ENCODE measurements at regions of chr6 and their contacts with region 1.

Region 1: DNA sequence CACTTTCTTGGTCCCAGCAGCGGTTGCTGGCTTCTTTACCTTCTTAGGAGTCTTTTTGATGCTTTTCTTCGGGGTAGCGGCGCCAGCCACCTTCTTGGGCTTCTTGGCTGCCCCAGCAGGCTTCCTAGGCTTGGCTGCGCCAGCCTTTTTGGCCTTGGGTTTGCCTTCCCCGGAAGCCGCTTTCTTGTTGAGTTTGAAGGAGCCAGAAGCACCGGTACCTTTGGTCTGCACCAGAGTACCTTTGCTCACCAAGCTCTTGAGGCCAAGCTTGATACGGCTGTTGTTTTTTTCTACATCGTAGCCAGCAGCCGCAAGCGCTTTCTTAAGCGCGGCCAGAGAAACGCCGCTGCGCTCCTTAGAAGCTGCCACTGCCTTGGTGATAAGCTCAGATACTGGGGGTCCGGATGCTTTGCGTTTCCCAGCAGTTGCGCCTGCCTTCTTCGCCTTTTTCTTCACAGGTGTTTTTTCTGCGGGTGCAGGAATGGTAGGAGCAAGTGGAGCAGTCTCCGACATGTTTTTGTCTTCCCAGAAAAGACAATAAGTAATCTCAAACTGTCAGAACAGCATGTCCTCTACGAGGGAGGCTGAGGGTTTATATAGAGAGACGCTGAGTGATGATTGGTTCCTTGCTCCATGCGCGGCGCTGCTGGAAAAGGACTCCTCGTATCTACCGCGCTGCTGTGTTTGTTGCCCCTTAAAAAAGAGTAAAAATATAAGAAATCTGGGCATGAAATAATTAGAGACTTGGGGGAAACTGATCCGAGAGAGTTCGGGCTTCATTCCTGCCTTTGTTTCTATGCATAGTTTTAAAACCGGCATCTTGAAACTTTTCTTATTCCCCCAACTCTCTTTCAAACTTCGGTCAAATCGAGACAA is 130.3 kb upstream of the BTN3A2 start:
- DNase-seq: peak; percentile 89
- ATAC-seq: peak; percentile 64
- H3K4me3 Mint-ChIP-seq: peak overlapping the region; percentile 78
- H3K27ac Mint-ChIP-seq: peak overlapping the region; percentile 99
- H3K4me1 Mint-ChIP-seq: peaks cover 41% of the 10 kb centered on the region
- H3K27me3 Mint-ChIP-seq: no peaks in the 10 kb centered on the region

Region 2: GRCh38 chr6:26045065-26045927 is 189.4 kb before region 1 on chr6:
- CTCF ChIA-PET with region 1: no interaction called
- POLR2A ChIA-PET with region 1: interaction called, 104 read pairs
- DNase-seq: peak; percentile 91
- ATAC-seq: peak; percentile 55
- H3K4me3 Mint-ChIP-seq: peak overlapping the region; percentile 88
- H3K27ac Mint-ChIP-seq: peak overlapping the region; percentile 99
- H3K4me1 Mint-ChIP-seq: peaks cover 43% of the 10 kb centered on the region
- H3K27me3 Mint-ChIP-seq: no peaks in the 10 kb centered on the region

Region 3: DNA sequence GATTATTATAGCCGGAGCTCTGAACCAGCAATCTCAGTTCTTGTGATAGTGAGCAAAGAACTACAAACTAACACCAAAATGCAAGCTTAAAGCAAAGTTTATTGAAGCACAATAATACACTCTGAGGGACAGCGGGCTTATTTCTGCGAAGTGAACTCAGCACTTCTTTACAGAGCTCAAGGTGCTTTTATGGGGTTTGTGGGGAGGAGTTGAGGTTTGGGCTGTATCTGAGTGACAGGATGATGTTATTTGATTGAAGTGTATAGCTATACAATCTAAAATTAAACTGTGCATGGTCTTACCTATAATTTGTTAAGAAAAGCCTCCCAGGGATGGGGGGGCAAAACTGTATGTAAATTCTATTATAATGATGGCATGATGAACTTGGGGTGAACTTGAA is 148.4 kb before region 1 on chr6:
- CTCF ChIA-PET with region 1: no interaction called
- POLR2A ChIA-PET with region 1: no interaction called
- DNase-seq: peak; percentile 81
- ATAC-seq: peak; percentile 91
- H3K4me3 Mint-ChIP-seq: peak overlapping the region; percentile 80
- H3K27ac Mint-ChIP-seq: peak overlapping the region; percentile 70
- H3K4me1 Mint-ChIP-seq: peaks cover 54% of the 10 kb centered on the region
- H3K27me3 Mint-ChIP-seq: peaks cover 3% of the 10 kb centered on the region

Region 4: GRCh38 chr6:26163427-26164119 is 71.1 kb before region 1 on chr6:
- CTCF ChIA-PET with region 1: no interaction called
- POLR2A ChIA-PET with region 1: interaction called, 294 read pairs
- DNase-seq: no peak
- ATAC-seq: no peak
- H3K4me3 Mint-ChIP-seq: no peak overlapping the region
- H3K27ac Mint-ChIP-seq: peak overlapping the region; percentile 61
- H3K4me1 Mint-ChIP-seq: peaks cover 66% of the 10 kb centered on the region
- H3K27me3 Mint-ChIP-seq: peaks cover 2% of the 10 kb centered on the region

Region 5: DNA sequence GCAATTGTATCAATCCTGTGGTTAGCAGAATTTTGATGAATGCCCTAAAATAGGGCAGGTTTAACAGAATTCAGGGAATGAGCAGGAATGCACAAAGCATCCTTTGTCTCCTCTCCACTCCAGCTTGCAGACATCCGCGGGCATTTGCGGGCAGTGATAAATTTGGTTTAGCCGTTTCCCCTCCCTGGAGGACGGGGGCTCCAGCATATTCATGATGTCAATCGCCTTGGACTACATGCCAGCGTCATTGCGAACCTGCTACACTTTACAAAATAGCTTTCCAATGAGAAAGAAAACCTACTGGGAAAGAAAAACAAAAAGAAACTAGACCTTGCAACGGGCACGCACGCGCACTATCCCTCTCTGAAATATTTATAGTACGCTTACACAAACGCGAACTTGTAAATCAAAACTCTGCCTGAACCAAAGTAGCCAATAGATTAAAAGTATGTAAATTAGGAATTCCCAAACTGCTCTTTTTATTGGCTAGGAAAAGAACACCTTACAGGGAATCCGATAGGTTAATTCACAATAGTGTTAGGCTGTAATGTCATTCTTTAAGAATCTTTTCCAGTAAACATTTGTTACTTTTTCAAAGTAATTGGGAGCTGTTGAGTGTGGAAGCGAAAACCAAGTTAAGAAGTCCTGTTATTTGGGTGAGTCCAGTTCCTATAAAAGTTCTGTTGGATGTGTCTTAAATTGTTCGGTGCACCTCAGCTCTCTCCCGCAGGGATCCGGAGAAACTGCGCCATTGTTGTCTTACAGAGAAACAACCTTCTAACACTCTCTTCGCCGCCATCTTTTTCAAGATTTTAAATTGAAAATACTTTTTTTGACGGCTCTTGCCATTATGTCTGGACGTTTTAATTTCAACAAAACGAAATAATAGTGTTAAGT is 10.8 kb before region 1 on chr6:
- CTCF ChIA-PET with region 1: interaction called, 6 read pairs
- POLR2A ChIA-PET with region 1: interaction called, 674 read pairs
- DNase-seq: peak; percentile 83
- ATAC-seq: peak; percentile 83
- H3K4me3 Mint-ChIP-seq: no peak overlapping the region
- H3K27ac Mint-ChIP-seq: no peak overlapping the region
- H3K4me1 Mint-ChIP-seq: peaks cover 37% of the 10 kb centered on the region
- H3K27me3 Mint-ChIP-seq: no peaks in the 10 kb centered on the region

Region 6: GRCh38 chr6:27132532-27133280 is 898.0 kb after region 1 on chr6:
- CTCF ChIA-PET with region 1: no interaction called
- POLR2A ChIA-PET with region 1: interaction called, 71 read pairs
- DNase-seq: peak; percentile 95
- ATAC-seq: peak; percentile 76
- H3K4me3 Mint-ChIP-seq: no peak overlapping the region
- H3K27ac Mint-ChIP-seq: no peak overlapping the region
- H3K4me1 Mint-ChIP-seq: peaks cover 68% of the 10 kb centered on the region
- H3K27me3 Mint-ChIP-seq: no peaks in the 10 kb centered on the region

Region 7: GRCh38 chr6:27825025-27825793 is 1590.5 kb after region 1 on chr6:
- CTCF ChIA-PET with region 1: no interaction called
- POLR2A ChIA-PET with region 1: interaction called, 13 read pairs
- DNase-seq: no peak
- ATAC-seq: peak; percentile 3
- H3K4me3 Mint-ChIP-seq: peak overlapping the region; percentile 93
- H3K27ac Mint-ChIP-seq: peak overlapping the region; percentile 99
- H3K4me1 Mint-ChIP-seq: peaks cover 45% of the 10 kb centered on the region
- H3K27me3 Mint-ChIP-seq: no peaks in the 10 kb centered on the region